OCI-LY7 (cell line): ENCODE measurements at regions of chr16 and their contacts with region 1.

Region 1: GRCh38 chr16:2919511-2920255 is 8.0 kb downstream of the FLYWCH1 start:
- DNase-seq: peak; percentile 71
- H3K4me3 ChIP-seq: no peak overlapping the region
- H3K27ac ChIP-seq: no peak overlapping the region
- H3K4me1 ChIP-seq: no peaks in the 10 kb centered on the region
- CTCF ChIP-seq: peak; percentile 95

Region 2: DNA sequence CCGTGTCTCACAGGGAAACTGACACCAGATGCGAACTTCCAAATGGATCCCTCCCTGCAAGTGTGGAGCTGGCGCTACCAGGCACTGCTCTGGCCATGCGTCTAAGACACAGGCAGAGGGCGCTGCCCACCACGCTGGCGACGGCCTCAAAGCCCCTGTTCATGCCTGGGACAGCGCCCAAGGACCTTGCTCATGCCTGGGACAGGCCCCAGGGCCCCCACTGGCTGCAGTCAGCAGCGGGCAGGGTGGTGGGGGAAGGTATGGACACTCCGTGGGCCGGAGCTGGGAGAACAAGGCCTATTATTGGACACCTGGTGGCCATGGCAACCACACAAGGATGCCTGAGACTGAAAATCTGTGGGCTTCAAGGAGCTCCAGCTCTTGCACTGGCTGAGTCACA is 80.8 kb before region 1 on chr16:
- CTCF ChIA-PET with region 1: no interaction called
- POLR2A ChIA-PET with region 1: no interaction called
- intact Hi-C with region 1: loop called (anchors 2 kb)
- DNase-seq: peak; percentile 74
- H3K4me3 ChIP-seq: no peak overlapping the region
- H3K27ac ChIP-seq: no peak overlapping the region
- H3K4me1 ChIP-seq: no peaks in the 10 kb centered on the region
- CTCF ChIP-seq: peak; percentile 85